A549 (cell line): ENCODE measurements at regions of chr17 and their contacts with region 1.

Region 1: GRCh38 chr17:4594931-4595684 is 10.8 kb downstream of the SMTNL2 start:
- DNase-seq: no peak
- ATAC-seq: no peak
- H3K4me3 ChIP-seq: no peak overlapping the region
- H3K27ac ChIP-seq: no peak overlapping the region
- H3K4me1 ChIP-seq: peaks cover 9% of the 10 kb centered on the region; the same call in 2 of the 3 replicates
- CTCF ChIP-seq: no peak
- EP300 ChIP-seq: no peak
- POLR2A ChIP-seq: no peak
- RAD21 ChIP-seq: no peak

Region 2: GRCh38 chr17:4583782-4584100 is 11.4 kb before region 1 on chr17:
- CTCF ChIA-PET with region 1: interaction called, 13 read pairs
- POLR2A ChIA-PET with region 1: no interaction called
- DNase-seq: peak; percentile 68 to 94
- ATAC-seq: peak; percentile 73 to 91
- H3K4me3 ChIP-seq: peak overlapping the region; percentile 49
- H3K27ac ChIP-seq: peak overlapping the region; percentile 23 to 70; a peak in 3 of 6 replicates
- H3K4me1 ChIP-seq: peaks cover 7% of the 10 kb centered on the region; the same call in 2 of the 3 replicates
- CTCF ChIP-seq: no peak; the same call in 2 of the 3 replicates
- EP300 ChIP-seq: no peak
- POLR2A ChIP-seq: no peak
- RAD21 ChIP-seq: no peak

Region 3: GRCh38 chr17:4607773-4608187 is 12.7 kb after region 1 on chr17:
- CTCF ChIA-PET with region 1: interaction called, 15 read pairs
- POLR2A ChIA-PET with region 1: no interaction called
- DNase-seq: no peak
- ATAC-seq: no peak
- H3K4me3 ChIP-seq: no peak overlapping the region
- H3K27ac ChIP-seq: no peak overlapping the region
- H3K4me1 ChIP-seq: no peaks in the 10 kb centered on the region
- CTCF ChIP-seq: no peak
- EP300 ChIP-seq: no peak
- POLR2A ChIP-seq: no peak
- RAD21 ChIP-seq: no peak

Region 4: DNA sequence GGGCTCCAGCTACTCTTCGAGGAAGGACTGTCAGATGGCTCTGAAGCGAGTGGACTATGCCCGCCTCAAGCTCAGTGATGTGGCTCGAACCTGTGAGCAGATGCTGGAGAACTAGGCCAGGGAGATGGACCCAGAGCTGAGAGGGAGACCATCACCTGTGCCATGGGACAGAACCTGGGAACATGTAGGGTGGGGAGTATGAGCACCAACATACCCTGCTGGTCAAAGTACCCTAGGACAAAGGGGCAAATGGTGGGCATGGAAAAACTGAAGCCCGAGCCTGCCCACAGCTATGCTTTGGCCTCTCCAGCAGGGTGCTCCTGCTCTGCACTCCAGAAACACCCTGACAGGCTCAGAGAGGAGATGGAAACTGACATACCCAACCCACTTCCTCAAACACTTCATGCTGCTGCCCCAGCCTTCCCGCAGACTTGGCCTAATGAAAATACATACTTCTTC is 138.0 kb after region 1 on chr17:
- CTCF ChIA-PET with region 1: no interaction called
- POLR2A ChIA-PET with region 1: no interaction called
- DNase-seq: no peak
- ATAC-seq: no peak
- H3K4me3 ChIP-seq: no peak overlapping the region
- H3K27ac ChIP-seq: no peak overlapping the region
- H3K4me1 ChIP-seq: peaks cover 17% of the 10 kb centered on the region
- CTCF ChIP-seq: no peak
- EP300 ChIP-seq: no peak
- POLR2A ChIP-seq: no peak
- RAD21 ChIP-seq: peak in 1 of 2 experiments; percentile 14; a peak in 1 of 5 replicates